ENCODE measurements at regions of chr5 and their contacts with region 1.

Region 1: DNA sequence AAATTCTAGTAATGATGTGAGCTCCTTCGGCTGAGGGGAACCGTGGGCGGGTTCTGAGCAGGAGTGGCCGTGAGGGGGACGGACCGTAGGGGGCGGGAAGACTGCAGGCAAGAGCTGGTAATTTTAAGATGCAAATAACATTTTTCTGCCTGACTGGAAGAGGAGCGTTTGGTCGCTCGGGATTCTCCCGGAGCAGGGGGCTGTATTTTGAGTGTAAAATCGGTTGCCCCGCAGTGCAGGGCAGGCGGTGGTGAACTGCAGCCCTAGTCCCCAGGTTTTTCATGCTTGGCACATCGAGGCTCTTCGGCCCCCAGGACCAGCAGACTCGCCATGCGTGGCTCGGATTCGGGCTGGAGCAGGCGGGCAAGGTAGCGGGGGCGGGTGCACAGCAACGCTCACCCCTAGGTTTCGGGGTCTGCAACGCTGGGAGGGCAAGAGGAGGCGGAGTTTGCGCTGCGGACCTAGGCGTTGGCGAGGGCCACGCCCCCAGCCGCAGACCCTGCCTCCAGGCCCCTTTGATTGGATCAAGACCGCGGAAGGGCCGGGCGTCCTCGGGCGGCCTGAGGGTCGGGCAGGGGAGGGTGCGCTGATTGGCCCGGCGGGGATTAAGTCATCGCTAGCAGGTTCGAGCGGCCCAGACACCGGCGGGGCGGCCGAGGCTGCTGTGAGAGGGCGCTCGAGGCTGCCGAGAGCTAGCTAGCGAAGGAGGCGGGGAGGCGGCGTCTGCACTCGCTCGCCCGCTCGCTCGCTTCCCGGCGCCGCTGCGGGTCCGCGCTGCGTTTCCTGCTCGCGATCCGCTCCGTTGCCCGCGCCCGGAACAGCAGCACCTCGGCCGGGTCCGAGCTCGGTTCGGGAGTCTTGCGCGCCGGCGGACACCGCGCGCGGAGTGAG is at the start of gene ARHGAP26:
- DNase-seq: peak; percentile 99
- H3K4me3 Mint-ChIP-seq: peak within 1 kb of the TSS; percentile 97
- H3K27ac Mint-ChIP-seq: peak within 1 kb of the TSS; percentile 60
- H3K4me1 Mint-ChIP-seq: peaks cover 37% of the 10 kb centered on the region
- H3K27me3 Mint-ChIP-seq: no peaks in the 10 kb centered on the region
- CTCF ChIP-seq: peak; percentile 11
- total RNA-seq, gene ARHGAP26: 112 and 118 TPM in 2 replicates

Region 2: DNA sequence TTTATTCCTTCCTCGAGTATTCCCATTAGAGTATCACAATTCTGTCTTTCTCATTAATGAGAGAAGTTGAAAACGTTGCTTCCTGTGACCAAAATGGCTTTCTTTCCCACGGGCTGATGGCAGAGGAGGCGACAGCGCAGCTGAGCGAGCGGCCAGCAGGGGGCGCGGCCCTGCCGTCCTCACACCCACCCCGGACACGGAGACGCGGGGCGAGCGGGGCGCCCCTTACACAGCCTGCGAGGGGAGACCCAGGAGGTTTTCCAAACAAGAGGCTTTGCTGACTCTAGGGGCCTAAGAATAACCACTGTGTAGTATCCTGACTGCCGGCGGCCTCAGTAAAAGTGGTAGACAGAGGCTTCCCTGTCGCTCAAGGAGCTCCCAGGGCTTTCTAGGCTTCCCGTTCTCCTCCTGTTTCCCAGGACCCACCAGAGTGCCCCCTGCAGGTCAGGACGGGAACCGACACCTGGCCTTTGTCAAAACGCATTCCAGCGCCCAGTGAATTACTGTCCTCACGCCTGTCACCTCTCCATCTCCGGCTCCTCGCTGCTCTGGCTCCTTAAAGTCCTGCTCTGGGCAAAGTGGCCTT is 56.8 kb before region 1 on chr5:
- CTCF ChIA-PET with region 1: interaction called, 16 read pairs
- intact Hi-C with region 1: no loop called
- DNase-seq: peak; percentile 96
- H3K4me3 Mint-ChIP-seq: peak overlapping the region; percentile 80
- H3K27ac Mint-ChIP-seq: peak overlapping the region; percentile 63
- H3K4me1 Mint-ChIP-seq: peaks cover 23% of the 10 kb centered on the region
- H3K27me3 Mint-ChIP-seq: no peaks in the 10 kb centered on the region
- CTCF ChIP-seq: peak; percentile 99

Region 3: DNA sequence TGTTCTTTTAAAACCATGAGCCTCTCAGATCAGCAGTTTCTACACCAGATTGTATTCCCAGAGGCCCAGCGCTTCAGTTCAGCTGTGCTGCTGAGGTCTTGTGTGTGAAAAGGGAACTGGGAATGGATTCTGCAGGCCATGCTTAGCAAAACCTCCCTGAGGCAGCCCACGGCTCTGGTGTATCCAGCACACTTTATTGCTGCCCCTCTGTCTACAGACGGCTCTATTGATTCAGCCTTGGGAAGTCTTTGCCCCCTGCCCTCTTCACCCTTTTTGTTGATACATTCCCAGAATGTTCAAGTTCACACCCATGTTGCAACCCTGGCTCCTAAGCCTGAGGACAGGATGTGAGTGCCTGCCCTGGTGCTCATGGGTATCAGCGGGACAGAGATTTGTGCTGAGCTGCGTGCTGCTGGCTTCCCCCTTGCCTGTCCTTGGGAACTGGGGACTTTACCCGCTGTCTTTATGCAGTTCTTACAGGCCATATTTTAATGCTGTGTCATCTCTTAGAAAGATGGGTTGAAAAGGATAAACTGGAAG is 37.5 kb after region 1 on chr5:
- CTCF ChIA-PET with region 1: interaction called, 14 read pairs
- intact Hi-C with region 1: no loop called
- DNase-seq: peak; percentile 29
- H3K4me3 Mint-ChIP-seq: peak overlapping the region; percentile 17
- H3K27ac Mint-ChIP-seq: peak overlapping the region; percentile 76
- H3K4me1 Mint-ChIP-seq: peaks cover 71% of the 10 kb centered on the region
- H3K27me3 Mint-ChIP-seq: no peaks in the 10 kb centered on the region
- CTCF ChIP-seq: no peak

Region 4: GRCh38 chr5:142845402-142845921 is 75.5 kb after region 1 on chr5:
- CTCF ChIA-PET with region 1: interaction called, 14 read pairs
- intact Hi-C with region 1: no loop called
- DNase-seq: no peak
- H3K4me3 Mint-ChIP-seq: peak overlapping the region; percentile 44
- H3K27ac Mint-ChIP-seq: peak overlapping the region; percentile 79
- H3K4me1 Mint-ChIP-seq: peaks cover 78% of the 10 kb centered on the region
- H3K27me3 Mint-ChIP-seq: no peaks in the 10 kb centered on the region
- CTCF ChIP-seq: no peak

Region 5: GRCh38 chr5:142865414-142866045 is 95.5 kb after region 1 on chr5:
- CTCF ChIA-PET with region 1: interaction called, 61 read pairs
- intact Hi-C with region 1: loop called (anchors 2 kb)
- DNase-seq: no peak
- H3K4me3 Mint-ChIP-seq: no peak overlapping the region
- H3K27ac Mint-ChIP-seq: peak overlapping the region; percentile 24
- H3K4me1 Mint-ChIP-seq: peaks cover 93% of the 10 kb centered on the region
- H3K27me3 Mint-ChIP-seq: no peaks in the 10 kb centered on the region
- CTCF ChIP-seq: no peak

Region 6: DNA sequence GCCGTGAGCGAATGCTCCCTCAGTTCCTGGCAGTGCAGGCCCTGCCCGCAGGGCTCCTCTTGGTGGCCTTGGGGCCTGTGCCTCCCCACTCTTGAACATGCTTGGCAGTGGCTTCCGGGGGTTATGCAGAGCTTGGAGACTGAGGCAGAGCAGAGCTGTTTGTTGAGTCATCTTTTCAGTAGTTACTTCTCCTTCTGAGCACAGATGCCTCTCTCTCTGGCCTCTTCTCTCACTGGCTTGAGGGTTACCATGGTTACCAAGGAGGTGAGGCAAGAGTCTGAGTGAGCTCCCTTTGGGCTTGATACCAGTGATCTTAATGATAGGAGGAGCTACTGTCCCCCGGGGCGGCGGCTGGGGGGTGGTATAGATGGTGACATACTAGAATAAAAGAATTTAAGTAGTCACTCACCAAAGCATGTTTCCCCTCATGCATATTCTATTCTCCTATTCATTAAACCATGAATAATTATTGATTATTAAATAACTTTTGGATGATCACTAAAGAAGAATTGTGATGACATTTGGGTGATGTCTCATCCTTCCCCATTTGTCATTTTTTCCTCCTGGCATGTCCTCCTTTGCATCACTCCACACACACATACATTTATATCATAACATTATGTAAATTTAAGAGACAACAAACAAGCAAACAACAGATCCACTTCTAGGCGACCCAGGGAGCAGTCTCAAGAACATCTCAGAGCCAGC is 111.2 kb after region 1 on chr5:
- CTCF ChIA-PET with region 1: interaction called, 11 read pairs
- intact Hi-C with region 1: loop called (anchors 2 kb)
- DNase-seq: no peak
- H3K4me3 Mint-ChIP-seq: no peak overlapping the region
- H3K27ac Mint-ChIP-seq: no peak overlapping the region
- H3K4me1 Mint-ChIP-seq: peaks cover 42% of the 10 kb centered on the region
- H3K27me3 Mint-ChIP-seq: no peaks in the 10 kb centered on the region
- CTCF ChIP-seq: no peak